AG04449 (cell line): ENCODE measurements at regions of chr1 and their contacts with region 1.

Region 1: GRCh38 chr1:145858894-145859490 is at the start of gene PIAS3:
- DNase-seq: peak; percentile 64
- H3K4me3 ChIP-seq: peak within 1 kb of the TSS; percentile 92
- CTCF ChIP-seq: no peak

Region 2: DNA sequence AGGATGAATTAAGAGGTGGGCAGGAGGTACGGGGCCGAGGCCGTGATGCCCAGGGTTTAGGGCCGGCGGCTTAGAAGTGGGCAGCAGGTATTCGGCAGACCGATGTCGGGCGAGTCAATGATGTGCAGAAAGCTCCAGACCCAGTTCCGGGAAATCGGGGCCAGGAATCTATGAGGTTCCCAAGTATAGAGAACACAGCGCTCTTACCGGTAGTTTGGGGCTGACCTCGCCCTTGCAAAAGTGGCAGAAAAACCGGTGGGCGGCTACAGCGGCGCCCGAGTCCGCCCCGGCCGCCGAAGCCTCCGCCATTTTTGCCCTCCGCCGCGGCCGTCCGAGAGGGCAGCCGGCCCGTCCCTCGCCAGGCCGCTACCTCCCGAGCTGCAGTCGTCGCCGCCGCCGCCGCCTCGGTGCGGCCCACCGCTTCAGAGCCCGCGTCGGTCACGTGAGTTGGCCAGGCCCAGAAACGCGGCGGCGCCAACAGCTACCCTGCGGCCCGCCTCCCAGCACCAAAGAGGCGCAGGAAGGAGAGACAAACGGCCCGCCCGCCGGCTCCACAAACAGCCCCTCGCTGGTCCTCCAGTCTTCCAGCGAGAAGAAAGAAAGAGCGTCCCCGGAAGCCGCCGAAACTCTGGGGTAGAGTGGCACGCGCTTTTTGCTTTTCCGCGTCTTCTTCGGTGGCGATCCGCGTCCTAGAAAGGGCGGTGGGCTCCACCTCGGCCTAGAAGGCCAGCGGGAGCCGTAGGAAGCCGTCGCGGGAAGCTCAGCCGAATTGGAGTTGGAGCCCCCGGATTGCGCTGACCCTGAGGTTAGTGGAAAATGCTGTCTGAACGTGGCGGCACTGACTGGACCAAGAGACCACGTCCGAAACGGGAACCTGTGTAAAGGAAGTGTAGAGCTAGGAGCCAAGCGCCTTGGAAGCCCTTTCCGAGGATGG is 35.2 kb before region 1 on chr1 and contains the starts of genes POLR3C and RNF115:
- CTCF ChIA-PET with region 1: interaction called, 3 read pairs
- POLR2A ChIA-PET with region 1: interaction called, 17 read pairs
- DNase-seq: peak; percentile 36
- H3K4me3 ChIP-seq: peak within 1 kb of the TSS; percentile 82
- CTCF ChIP-seq: no peak

Region 3: GRCh38 chr1:145879775-145880174 is 20.8 kb after region 1 on chr1:
- CTCF ChIA-PET with region 1: interaction called, 10 read pairs
- POLR2A ChIA-PET with region 1: interaction called, 10 read pairs
- DNase-seq: no peak
- H3K4me3 ChIP-seq: no peak overlapping the region
- CTCF ChIP-seq: no peak

Region 4: DNA sequence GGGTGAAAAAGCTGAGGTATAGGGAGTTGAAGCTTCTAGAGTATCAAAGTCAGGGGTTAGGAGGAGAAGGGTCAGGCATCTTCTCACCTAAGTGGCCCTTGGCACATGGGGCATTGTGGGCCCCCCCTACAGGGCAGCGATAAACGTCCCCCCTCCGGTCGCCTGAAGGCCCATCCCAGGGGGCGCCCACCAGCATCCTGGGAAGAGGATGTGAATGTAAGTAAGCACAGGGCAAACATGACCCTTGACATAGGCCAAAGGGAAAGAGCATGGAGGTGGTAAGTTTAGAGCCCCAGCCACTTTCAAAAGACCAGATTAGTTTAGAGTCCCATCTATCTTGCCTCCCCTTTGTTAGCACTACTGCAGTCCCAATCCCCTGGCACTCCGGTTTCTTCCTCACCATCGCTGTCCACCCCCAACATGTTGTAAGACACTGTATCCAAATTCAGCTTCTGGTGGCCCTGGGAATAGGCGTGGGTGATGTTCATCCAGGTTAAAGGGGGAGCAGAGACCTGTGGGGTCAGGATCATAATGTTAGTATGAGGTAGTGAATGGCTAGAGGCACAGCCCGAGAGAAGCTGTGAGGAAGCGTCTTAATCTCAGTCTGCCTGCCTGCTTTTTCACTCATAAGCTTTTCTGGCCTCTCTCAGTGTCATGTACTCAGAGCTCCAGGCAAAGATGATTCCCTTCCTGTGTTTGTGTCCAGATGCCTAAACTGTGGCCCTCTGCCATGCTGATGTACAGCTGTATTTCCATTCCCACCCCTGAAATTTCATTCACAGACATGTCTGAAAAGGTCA is 48.2 kb after region 1 on chr1:
- CTCF ChIA-PET with region 1: interaction called, 52 read pairs
- POLR2A ChIA-PET with region 1: no interaction called
- DNase-seq: no peak
- H3K4me3 ChIP-seq: no peak overlapping the region
- CTCF ChIP-seq: no peak

Region 5: GRCh38 chr1:145978854-145979759 is 120.1 kb after region 1 on chr1:
- CTCF ChIA-PET with region 1: interaction called, 11 read pairs
- POLR2A ChIA-PET with region 1: no interaction called
- DNase-seq: peak; percentile 100
- H3K4me3 ChIP-seq: peak overlapping the region; percentile 31
- CTCF ChIP-seq: peak; percentile 42